CD8-positive, alpha-beta memory T cell (primary cell): ENCODE measurements at regions of chr21 and their contacts with region 1.

Region 1: GRCh38 chr21:39388038-39388810 is 39.3 kb upstream of the HMGN1 start:
- DNase-seq: peak; percentile 79 to 91 (median 86)
- H3K4me3 ChIP-seq: peak overlapping the region; percentile 71
- H3K4me3 Mint-ChIP-seq: peak overlapping the region; percentile 88 to 93 (median 91)
- H3K27ac ChIP-seq: peak overlapping the region; percentile 76
- H3K27ac Mint-ChIP-seq: peak overlapping the region; percentile 68 to 97 (median 94)
- H3K4me1 ChIP-seq: peaks cover 4% of the 10 kb centered on the region
- H3K4me1 Mint-ChIP-seq: peaks cover 26 to 46% (median 39%) of the 10 kb centered on the region in 3 donors
- H3K27me3 ChIP-seq: no peaks in the 10 kb centered on the region
- H3K27me3 Mint-ChIP-seq: peaks cover 0 to 2% of the 10 kb centered on the region in 2 donors

Region 2: DNA sequence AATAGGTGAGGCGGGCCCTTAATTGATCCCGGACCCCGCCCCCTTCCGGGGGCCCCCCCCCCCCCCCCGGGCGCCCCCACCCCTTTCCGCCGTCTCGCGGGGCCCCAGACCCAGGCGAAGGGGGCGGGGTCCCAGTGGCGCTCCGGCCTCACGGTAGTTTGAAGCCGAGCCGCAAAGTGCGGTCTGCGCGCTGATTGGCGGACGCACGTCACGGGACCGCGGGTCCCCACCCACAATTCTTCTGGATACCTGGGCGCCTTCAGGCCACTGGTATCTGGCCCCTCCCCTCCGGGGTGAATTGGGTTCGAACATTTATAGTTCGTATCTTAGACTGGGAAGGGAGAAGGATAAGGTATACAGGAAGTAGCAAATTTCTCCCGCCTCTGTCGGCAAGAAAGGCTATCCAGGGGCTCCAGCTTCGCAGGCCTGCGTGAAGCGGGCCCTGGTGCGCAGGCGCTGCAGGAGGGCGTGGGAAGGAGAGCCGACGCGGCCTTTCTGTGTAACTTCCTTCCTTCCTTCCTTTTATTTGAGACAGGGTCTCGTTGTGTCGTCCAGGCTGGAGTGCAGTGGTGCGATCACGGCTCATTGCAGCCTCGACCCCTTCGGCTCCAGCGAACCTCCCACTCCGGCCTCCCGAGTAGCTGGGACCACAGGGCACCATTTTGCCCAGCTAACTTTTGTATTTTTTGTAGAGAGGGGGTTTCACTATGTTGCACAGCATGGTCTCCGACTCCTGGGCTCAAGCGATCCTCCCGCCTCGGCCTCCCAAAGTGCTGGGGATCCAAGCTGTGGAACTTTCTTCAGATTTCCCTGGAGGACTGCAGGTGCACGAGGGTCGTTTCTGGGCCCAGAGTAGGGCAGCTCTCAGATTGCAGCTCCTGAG is 38.8 kb before region 1 on chr21:
- CTCF ChIA-PET with region 1: interaction called, 11 read pairs
- POLR2A ChIA-PET with region 1: interaction called, 10 read pairs
- DNase-seq: peak; percentile 94 to 97 (median 96)
- H3K4me3 ChIP-seq: peak overlapping the region; percentile 97
- H3K4me3 Mint-ChIP-seq: peak overlapping the region; percentile 93 to 99 (median 95)
- H3K27ac ChIP-seq: peak overlapping the region; percentile 92
- H3K27ac Mint-ChIP-seq: peak overlapping the region; percentile 97 to 99 (median 98)
- H3K4me1 ChIP-seq: peaks cover 32% of the 10 kb centered on the region
- H3K4me1 Mint-ChIP-seq: peaks cover 36 to 43% (median 36%) of the 10 kb centered on the region in 3 donors
- H3K27me3 ChIP-seq: no peaks in the 10 kb centered on the region
- H3K27me3 Mint-ChIP-seq: peaks cover 3 to 6% of the 10 kb centered on the region in 2 donors

Region 3: GRCh38 chr21:39373644-39374043 is 14.6 kb before region 1 on chr21:
- CTCF ChIA-PET with region 1: interaction called, 13 read pairs
- POLR2A ChIA-PET with region 1: interaction called, 5 read pairs
- DNase-seq: peak in 1 of 5 donors; percentile 12
- H3K4me3 ChIP-seq: no peak overlapping the region
- H3K4me3 Mint-ChIP-seq: peak overlapping the region in 1 of 7 donors; percentile 15
- H3K27ac ChIP-seq: no peak overlapping the region
- H3K27ac Mint-ChIP-seq: no peak overlapping the region
- H3K4me1 ChIP-seq: no peaks in the 10 kb centered on the region
- H3K4me1 Mint-ChIP-seq: no peaks in the 10 kb centered on the region
- H3K27me3 ChIP-seq: no peaks in the 10 kb centered on the region
- H3K27me3 Mint-ChIP-seq: peaks cover 15 to 30% of the 10 kb centered on the region in 2 donors

Region 4: GRCh38 chr21:39502631-39503030 is 114.4 kb after region 1 on chr21:
- CTCF ChIA-PET with region 1: no interaction called
- POLR2A ChIA-PET with region 1: no interaction called
- DNase-seq: no peak
- H3K4me3 ChIP-seq: no peak overlapping the region
- H3K4me3 Mint-ChIP-seq: no peak overlapping the region
- H3K27ac ChIP-seq: no peak overlapping the region
- H3K27ac Mint-ChIP-seq: no peak overlapping the region
- H3K4me1 ChIP-seq: no peaks in the 10 kb centered on the region
- H3K4me1 Mint-ChIP-seq: no peaks in the 10 kb centered on the region
- H3K27me3 ChIP-seq: no peaks in the 10 kb centered on the region
- H3K27me3 Mint-ChIP-seq: peaks cover 0 to 3% of the 10 kb centered on the region in 2 donors